Mammary epithelial cell (primary cell): ENCODE measurements at regions of chr2 and their contacts with region 1.

Region 1: DNA sequence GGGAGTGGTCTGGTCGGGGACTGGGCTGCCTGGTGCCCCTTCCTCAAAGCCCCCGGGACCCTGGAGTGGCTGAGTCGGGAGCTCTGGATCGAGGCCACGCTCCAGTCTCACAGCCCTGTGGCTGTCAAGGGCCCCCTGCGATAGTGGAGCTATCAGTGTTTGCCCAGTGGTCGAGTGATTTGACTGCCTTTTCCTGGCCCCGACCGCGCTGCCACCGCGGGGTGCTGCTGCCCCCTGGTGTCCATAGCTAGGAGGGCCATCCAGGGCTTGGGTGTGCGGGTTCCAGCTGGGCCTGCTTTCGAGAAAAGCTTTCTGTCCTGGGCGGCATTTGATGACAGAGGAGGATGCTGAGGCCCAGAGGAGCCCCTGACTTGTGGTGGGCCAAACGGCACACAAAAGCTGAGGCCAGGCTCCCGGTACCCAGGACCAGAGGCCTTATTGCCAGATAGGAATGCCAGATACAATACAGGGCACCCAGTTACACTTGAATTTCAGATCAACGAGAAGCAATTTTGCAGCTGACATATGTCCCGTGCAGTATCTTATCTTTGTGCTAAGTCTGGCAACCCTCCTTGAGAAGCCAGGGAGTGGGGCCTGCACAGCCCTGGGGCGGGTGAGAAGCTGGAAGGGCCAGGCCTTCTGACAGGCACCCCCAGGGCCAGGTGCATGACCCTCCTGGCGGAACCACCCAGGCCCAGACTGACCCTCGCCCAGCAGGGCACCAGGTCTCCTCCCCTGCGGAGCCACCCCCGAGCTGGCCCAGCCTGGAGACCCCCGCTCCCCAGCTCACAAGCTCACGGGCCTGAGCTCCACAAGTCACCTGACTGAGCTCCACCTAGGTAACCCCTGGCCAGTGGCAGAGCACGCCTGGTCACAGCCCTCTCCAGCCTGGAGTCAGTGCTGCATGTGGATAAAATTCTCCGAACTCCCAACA is 13.0 kb downstream of the ODC1 start:
- DNase-seq: peak; percentile 41
- H3K4me3 ChIP-seq: no peak overlapping the region
- H3K27ac ChIP-seq: no peak overlapping the region
- H3K4me1 ChIP-seq: peaks cover 4% of the 10 kb centered on the region
- H3K27me3 ChIP-seq: no peaks in the 10 kb centered on the region
- CTCF ChIP-seq: peak; percentile 89 to 96

Region 2: GRCh38 chr2:9793156-9793917 is 641.8 kb before region 1 on chr2:
- CTCF ChIA-PET with region 1: no interaction called
- dilution Hi-C with region 1: no loop called
- in situ Hi-C with region 1: no loop called
- intact Hi-C with region 1: no loop called
- DNase-seq: no peak
- H3K4me3 ChIP-seq: no peak overlapping the region
- H3K27ac ChIP-seq: no peak overlapping the region
- H3K4me1 ChIP-seq: peaks cover 11% of the 10 kb centered on the region
- H3K27me3 ChIP-seq: no peaks in the 10 kb centered on the region
- CTCF ChIP-seq: no peak

Region 3: DNA sequence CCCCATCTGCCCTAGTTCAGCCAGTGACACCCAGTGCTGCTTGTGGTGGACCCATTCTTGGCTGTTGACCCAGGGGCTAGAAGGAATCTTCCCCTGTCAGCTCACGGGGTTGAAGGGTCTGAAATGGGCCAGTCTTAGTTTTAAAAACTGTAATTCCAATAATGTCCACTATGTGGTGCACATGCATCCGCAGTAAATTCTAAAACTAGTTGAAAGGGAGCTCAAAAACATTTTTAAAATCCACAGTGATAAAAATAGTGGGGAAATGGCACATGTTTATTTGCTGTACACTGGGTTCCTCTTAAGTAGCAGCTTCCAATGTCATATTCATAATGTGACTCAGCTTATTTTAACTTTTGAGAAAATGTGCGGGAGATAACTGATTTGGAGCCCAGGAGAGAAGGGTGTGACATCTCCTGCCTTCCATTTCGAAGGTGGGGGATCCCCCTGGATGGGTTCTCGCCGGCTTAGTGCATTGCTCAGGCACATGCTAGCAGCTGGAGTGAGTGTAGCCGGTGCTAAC is 450.9 kb before region 1 on chr2:
- CTCF ChIA-PET with region 1: no interaction called
- dilution Hi-C with region 1: no loop called
- in situ Hi-C with region 1: no loop called
- intact Hi-C with region 1: loop called (anchors 10 kb)
- DNase-seq: peak; percentile 11
- H3K4me3 ChIP-seq: no peak overlapping the region
- H3K27ac ChIP-seq: no peak overlapping the region
- H3K4me1 ChIP-seq: no peaks in the 10 kb centered on the region
- H3K27me3 ChIP-seq: no peaks in the 10 kb centered on the region
- CTCF ChIP-seq: peak; percentile 65 to 79

Region 4: DNA sequence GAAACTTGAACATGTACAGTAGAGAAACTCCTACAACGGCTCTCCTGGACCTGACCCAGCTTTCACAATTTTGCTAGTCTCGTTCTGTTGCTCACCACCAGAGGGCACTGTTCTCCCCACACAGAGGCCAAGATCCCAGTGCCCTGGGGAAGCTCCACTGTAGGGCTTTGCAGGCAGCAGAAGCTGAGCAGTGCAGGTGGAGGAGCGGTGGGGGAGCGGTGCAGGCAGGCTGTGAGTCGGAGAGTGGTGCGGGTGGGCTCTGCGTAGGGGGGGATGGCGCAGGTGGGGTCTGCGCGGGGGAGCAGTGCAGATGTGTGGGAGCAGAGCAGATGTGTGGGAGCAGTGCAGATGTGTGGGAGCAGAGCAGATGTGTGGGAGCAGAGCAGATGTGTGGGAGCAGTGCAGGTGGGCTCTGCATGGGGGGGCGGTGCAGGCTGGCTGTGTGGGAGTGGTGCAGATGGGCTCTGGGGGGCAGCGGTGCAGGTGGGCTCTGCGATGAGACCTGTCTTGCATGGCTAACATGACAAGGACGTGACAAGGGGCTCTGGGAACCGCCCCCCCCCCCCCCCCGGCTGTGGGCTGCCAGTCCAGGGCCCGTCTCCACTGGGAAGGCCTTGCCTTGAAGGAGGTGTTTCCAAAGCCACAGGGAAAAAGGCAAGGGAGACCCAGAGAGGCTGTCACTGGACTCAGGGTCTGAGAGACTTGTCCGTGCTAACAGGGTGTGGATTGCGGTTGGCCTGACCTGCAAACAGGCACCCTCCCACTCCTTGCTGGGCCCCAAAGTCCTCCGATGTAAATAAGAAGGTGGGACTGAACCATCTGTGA is 362.3 kb before region 1 on chr2:
- CTCF ChIA-PET with region 1: interaction called, 11 read pairs
- dilution Hi-C with region 1: no loop called
- in situ Hi-C with region 1: loop called (anchors 5 to 10 kb)
- intact Hi-C with region 1: loop called (anchors 1 kb)
- DNase-seq: peak; percentile 71
- H3K4me3 ChIP-seq: no peak overlapping the region
- H3K27ac ChIP-seq: no peak overlapping the region
- H3K4me1 ChIP-seq: no peaks in the 10 kb centered on the region
- H3K27me3 ChIP-seq: no peaks in the 10 kb centered on the region
- CTCF ChIP-seq: peak; percentile 79 to 92

Region 5: DNA sequence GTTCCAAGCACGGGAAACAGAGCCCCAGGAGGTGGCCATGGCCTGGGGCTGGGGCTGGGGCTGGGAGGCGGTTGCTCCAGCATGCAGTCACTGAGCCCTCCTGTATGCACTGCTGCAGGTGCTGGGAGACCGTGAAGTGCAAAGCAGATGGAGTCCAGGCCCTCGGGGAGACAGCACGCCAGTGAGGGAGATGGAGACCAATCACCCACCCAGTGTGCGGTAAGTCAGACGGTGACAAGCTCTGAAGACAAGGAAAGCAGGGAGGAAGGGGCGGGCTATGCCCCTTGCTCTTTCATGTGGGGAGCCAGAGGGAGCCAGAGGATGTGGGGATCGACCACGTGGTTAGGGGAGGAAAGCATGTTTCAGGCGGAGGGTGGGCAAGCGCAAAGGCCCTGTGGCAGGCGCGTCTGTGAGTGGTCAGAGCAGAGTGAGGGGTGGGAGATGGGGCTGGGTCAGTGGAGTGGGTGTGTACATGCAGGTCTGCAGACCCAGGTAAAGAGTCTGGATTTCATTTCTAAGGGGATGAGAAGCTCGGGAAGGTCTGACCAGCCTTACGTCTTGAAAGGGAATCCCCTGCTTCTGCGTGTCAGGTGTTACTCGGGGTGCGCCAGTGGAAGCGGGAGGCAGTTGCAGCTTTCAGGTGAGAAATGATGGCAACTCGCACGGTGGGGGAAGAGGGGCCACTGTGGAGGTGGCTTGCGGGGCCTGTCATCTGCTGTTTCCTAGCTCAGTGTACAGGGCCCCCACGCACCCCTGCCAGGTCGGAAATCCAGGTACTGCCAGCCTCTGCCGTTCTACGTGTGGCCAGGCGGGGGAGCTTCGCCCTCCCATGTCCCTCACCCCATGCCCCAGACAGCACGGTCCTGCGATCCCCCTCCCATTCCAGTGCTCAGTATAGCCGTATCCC is 293.2 kb before region 1 on chr2:
- CTCF ChIA-PET with region 1: interaction called, 4 read pairs
- dilution Hi-C with region 1: no loop called
- in situ Hi-C with region 1: no loop called
- intact Hi-C with region 1: loop called (anchors 1 kb)
- DNase-seq: no peak
- H3K4me3 ChIP-seq: no peak overlapping the region
- H3K27ac ChIP-seq: no peak overlapping the region
- H3K4me1 ChIP-seq: peaks cover 10% of the 10 kb centered on the region
- H3K27me3 ChIP-seq: no peaks in the 10 kb centered on the region
- CTCF ChIP-seq: peak; percentile 49 to 70

Region 6: DNA sequence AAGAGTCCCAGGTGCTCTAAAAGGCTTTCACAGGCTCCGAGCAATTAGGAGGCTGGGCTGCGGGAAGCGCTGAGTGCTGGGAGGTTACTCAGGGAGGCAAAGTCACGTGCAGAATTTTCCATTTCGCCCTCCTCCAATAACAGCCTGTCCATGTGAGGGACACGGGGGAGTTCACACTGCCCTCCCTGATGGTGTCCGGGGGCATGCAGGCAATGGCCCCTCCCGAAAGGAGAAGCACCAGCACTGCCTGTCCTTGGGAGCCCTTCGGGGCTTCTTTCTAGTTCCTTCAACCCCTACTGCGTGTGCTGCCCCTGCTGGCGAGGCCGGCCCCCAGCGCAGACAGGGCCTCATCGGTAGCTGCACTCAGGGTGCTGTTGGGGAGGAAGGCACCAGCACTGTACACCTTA is 195.6 kb before region 1 on chr2:
- CTCF ChIA-PET with region 1: no interaction called
- dilution Hi-C with region 1: no loop called
- in situ Hi-C with region 1: no loop called
- intact Hi-C with region 1: no loop called
- DNase-seq: no peak
- H3K4me3 ChIP-seq: no peak overlapping the region
- H3K27ac ChIP-seq: no peak overlapping the region
- H3K4me1 ChIP-seq: no peaks in the 10 kb centered on the region
- H3K27me3 ChIP-seq: no peaks in the 10 kb centered on the region
- CTCF ChIP-seq: no peak

Region 7: GRCh38 chr2:10360851-10361588 is 74.1 kb before region 1 on chr2:
- CTCF ChIA-PET with region 1: no interaction called
- dilution Hi-C with region 1: no loop called
- in situ Hi-C with region 1: no loop called
- intact Hi-C with region 1: no loop called
- DNase-seq: no peak
- H3K4me3 ChIP-seq: no peak overlapping the region
- H3K27ac ChIP-seq: no peak overlapping the region
- H3K4me1 ChIP-seq: no peaks in the 10 kb centered on the region
- H3K27me3 ChIP-seq: no peaks in the 10 kb centered on the region
- CTCF ChIP-seq: no peak

Region 8: GRCh38 chr2:10477443-10478297 is 42.5 kb after region 1 on chr2:
- CTCF ChIA-PET with region 1: no interaction called
- dilution Hi-C with region 1: no loop called
- in situ Hi-C with region 1: no loop called
- intact Hi-C with region 1: no loop called
- DNase-seq: no peak
- H3K4me3 ChIP-seq: no peak overlapping the region
- H3K27ac ChIP-seq: no peak overlapping the region
- H3K4me1 ChIP-seq: no peaks in the 10 kb centered on the region
- H3K27me3 ChIP-seq: peaks cover 4% of the 10 kb centered on the region
- CTCF ChIP-seq: no peak

Region 9: GRCh38 chr2:10659898-10660568 is 224.9 kb after region 1 on chr2:
- CTCF ChIA-PET with region 1: interaction called, 3 read pairs
- dilution Hi-C with region 1: no loop called
- in situ Hi-C with region 1: loop called in 1 of 2 experiments (anchors 5 kb)
- intact Hi-C with region 1: loop called (anchors 2 kb)
- DNase-seq: peak; percentile 52
- H3K4me3 ChIP-seq: no peak overlapping the region
- H3K27ac ChIP-seq: no peak overlapping the region
- H3K4me1 ChIP-seq: peaks cover 30% of the 10 kb centered on the region
- H3K27me3 ChIP-seq: no peaks in the 10 kb centered on the region
- CTCF ChIP-seq: peak; percentile 76 to 78